Left cardiac atrium (tissue), 4 donors: ENCODE measurements at regions of chr5 and their contacts with region 1.

Region 1: DNA sequence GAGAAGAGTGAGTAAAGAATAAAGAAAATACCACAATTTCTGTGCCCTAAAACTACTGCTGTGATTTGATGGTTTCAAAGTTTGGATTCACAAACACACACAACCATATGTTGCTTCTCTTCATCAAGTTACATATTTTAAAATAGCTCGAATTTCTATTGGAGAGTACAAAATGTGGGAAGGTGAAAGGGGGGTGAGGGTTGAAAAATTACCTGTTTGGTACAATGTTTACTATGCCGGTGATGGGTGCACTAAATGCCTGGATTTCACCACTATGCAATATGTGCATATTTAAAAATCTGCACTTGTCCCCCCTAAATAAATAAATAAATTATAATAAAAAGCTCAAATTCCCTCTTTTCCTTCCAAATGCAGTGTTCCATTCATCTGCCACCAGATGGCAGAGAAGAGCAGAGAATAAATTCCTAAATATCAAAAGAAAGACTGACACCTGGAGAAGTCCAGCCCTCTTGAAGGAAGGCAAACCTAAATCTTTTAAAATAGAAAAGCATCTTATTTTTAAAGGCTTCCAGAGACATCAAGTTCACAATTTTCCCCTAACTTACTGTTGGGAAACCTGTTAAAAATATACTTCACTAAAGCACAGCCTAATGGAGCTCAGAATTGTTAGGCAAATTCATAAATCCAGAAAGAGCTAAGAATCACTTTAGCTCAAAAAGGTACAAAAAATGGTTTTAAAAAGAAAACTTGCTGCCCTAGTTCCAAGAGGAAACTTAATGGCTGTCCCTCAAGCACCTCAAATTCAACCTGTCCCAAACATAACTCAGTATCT is 24.8 kb upstream of the HNRNPA0 start:
- DNase-seq: no peak
- ATAC-seq: no peak

Region 2: GRCh38 chr5:137822158-137822764 is 43.3 kb after region 1 on chr5:
- intact Hi-C with region 1: loop called in 1 of 2 experiments (anchors 2 kb)
- DNase-seq: peak; percentile 23
- ATAC-seq: peak; percentile 65 to 80

Region 3: GRCh38 chr5:138138949-138139780 is 360.2 kb after region 1 on chr5 and contains the start of gene NME5:
- intact Hi-C with region 1: loop called (anchors 10 kb)
- DNase-seq: peak; percentile 77
- ATAC-seq: peak; percentile 89 to 93
- total RNA-seq, gene NME5: 1.9 to 2.7 TPM